Lower leg skin (tissue), 4 donors: ENCODE measurements at regions of chr10 and their contacts with region 1.

Region 1: GRCh38 chr10:30392564-30392990 is 41.4 kb upstream of the MAP3K8 start:
- DNase-seq: peak; percentile 50 to 93
- H3K4me3 ChIP-seq: no peak overlapping the region
- CTCF ChIP-seq: peak in 1 of 3 donors; percentile 80
- POLR2A ChIP-seq: no peak

Region 2: DNA sequence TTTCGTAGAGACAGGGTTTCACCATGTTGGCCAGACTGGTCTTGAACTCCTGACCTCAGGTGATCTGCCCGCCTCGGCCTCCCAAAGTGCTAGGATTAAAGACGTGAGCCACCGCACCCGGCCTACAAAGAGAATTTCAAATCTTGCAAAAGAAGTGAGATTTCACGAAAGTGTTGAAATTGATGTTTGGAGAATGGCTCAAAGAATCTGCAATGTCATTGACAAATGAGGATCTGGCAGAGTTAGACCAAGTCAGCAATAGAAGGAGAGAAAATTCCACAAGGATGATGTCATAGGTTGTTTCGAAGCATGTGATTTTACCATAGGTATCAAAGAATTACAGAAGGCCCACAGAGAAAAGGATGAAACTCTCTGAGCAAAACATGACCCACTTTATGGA is 165.3 kb after region 1 on chr10:
- intact Hi-C with region 1: no loop called
- DNase-seq: no peak
- H3K4me3 ChIP-seq: no peak overlapping the region
- CTCF ChIP-seq: no peak
- POLR2A ChIP-seq: no peak

Region 3: DNA sequence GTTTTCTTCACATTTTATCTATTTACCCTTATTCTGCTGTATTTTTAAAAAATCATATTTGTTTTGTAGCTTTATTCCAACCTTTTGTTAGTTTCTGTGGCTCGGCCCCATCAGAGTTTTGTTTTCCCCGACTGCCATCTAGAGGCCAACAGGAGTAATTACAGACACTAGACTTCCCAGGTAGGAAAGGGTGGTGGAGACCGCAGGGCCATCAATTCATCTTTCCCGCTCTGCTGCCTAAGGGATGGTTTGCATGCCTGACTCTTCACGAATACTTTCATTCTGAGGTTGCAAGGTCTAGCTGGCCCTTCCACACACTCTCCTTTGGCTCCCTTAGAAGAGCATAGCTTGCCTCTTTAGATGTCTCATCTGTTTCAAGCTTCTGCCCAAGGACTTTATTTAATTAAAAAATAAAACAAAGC is 198.7 kb after region 1 on chr10:
- intact Hi-C with region 1: loop called (anchors 5 kb)
- DNase-seq: no peak
- H3K4me3 ChIP-seq: no peak overlapping the region
- CTCF ChIP-seq: peak in 1 of 3 donors; percentile 66
- POLR2A ChIP-seq: no peak